ENCODE measurements at regions of chr6 and their contacts with region 1.

Region 1: DNA sequence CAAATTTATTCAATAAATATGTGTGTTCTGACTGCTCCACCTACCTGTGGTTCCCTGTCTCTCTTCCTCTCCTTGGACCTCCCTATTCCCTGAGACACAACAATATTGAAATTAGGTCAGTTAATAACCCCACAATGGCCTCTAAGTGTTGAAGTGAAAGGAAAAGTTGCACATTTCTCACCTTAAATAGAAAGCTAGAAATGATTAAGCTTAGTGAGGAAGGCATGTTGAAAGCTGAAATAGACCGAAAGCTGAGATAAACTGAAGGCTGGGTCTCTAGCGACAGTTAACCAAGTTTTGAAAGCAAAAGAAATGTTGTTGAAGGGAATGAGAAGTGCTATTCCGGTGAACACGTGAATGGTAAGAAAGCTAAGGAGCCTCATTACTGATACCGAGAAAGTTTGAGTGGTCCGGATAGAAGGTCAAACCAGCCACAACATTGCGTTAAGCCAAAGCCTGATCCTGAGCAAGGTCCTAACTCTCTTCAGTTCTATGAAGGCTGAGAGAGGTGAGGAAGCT is 34.1 kb downstream of the UST start:
- DNase-seq: peak; percentile 73
- ATAC-seq: peak; percentile 97
- H3K4me3 ChIP-seq: no peak overlapping the region
- H3K27ac ChIP-seq: no peak overlapping the region
- H3K4me1 ChIP-seq: peaks cover 8% of the 10 kb centered on the region
- H3K27me3 ChIP-seq: 0 out of 4 replicates have a peak, but pooled peaks cover 0 to 1% of the 10 kb centered on the region in 2 experiments
- CTCF ChIP-seq: peak in 1 of 3 experiments; percentile 19; a peak in 1 of 6 replicates
- EP300 ChIP-seq: 0 out of 4 replicates have a peak, but pooled peaks of 1 of the 2 experiments have one; percentile 9
- POLR2A ChIP-seq: no peak
- RAD21 ChIP-seq: no peak

Region 2: DNA sequence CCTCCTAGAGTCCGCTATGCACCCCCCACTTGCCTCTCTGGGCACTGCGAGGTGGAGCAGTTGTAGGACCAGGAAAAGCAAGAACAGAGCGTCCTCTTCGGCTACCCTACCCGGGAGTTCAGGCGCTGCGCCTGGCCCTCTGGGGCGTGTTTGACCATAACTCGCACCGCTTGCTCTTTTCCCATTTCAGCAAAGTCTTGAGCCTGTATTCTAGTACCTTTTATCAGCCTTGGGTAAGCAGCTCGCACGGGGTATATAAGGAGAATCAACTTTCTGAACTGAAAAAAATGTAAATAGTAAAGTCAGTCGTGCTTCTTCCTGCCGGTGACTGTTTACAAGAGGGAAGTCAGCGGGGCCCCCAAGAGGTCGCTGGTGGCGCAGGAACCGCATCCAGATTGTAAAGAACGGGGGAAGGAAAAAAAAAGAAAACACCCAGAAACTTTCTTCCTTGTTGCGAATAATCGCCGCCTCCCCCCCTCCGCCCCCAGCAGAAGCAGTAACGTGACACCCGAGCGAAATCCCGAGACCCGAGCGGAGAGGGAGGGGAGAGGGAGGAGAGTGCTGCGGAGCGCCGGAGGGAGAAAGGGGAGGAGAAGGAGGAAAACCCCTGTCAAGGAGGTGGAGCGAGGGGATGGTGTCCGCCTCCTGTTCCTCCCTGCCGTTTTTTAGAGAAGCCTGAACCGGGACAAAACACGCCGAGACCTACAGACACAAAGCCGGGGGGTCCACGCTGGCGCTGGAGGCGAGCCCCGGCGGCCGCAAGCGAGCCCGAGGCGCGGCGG is 34.4 kb before region 1 on chr6 and contains the start of gene UST:
- CTCF ChIA-PET with region 1: no interaction called
- POLR2A ChIA-PET with region 1: no interaction called
- RAD21 ChIA-PET with region 1: interaction called, 5 read pairs
- SMC1A ChIA-PET with region 1: interaction called, 6 read pairs
- in situ Hi-C with region 1: no loop called
- intact Hi-C with region 1: loop called (anchors 5 kb)
- DNase-seq: no peak
- ATAC-seq: peak; percentile 47
- H3K4me3 ChIP-seq: peak within 1 kb of the TSS; percentile 64
- H3K27ac ChIP-seq: no peak within 1 kb of the TSS
- H3K4me1 ChIP-seq: no peaks in the 10 kb centered on the region
- H3K27me3 ChIP-seq: peaks cover 1 to 17% of the 10 kb centered on the region in 2 experiments; a peak in 3 of 4 replicates
- CTCF ChIP-seq: peak; percentile 47 to 70 (median 57)
- EP300 ChIP-seq: no peak
- POLR2A ChIP-seq: no peak
- RAD21 ChIP-seq: peak; percentile 85
- polyA plus RNA-seq, gene UST: 3.6 to 3.7 TPM

Region 3: DNA sequence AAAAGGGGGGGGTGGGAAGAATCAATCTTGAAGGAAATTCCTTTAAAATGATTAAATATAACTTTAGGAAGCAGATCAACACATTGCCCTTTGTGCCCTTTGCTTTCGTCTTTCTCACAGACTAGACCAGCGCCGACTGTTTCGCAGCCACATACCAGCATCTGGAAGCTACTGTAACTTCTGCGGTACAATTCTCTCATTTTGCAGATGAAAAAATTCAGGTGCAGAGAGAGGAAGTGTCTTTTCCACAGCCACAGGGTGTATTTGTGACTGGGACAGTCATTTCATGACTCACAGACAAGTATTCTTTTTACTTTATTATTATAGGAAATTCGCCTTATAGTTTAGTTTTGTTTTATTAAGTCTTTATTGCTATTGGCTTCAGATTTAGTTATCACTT is 50.1 kb after region 1 on chr6:
- CTCF ChIA-PET with region 1: no interaction called
- POLR2A ChIA-PET with region 1: no interaction called
- RAD21 ChIA-PET with region 1: no interaction called
- SMC1A ChIA-PET with region 1: interaction called, 3 read pairs
- in situ Hi-C with region 1: no loop called
- intact Hi-C with region 1: loop called (anchors 2 kb)
- DNase-seq: no peak
- ATAC-seq: peak; percentile 73
- H3K4me3 ChIP-seq: no peak overlapping the region
- H3K27ac ChIP-seq: no peak overlapping the region
- H3K4me1 ChIP-seq: no peaks in the 10 kb centered on the region
- H3K27me3 ChIP-seq: no peaks in the 10 kb centered on the region
- CTCF ChIP-seq: no peak
- EP300 ChIP-seq: no peak
- POLR2A ChIP-seq: no peak
- RAD21 ChIP-seq: no peak

Region 4: DNA sequence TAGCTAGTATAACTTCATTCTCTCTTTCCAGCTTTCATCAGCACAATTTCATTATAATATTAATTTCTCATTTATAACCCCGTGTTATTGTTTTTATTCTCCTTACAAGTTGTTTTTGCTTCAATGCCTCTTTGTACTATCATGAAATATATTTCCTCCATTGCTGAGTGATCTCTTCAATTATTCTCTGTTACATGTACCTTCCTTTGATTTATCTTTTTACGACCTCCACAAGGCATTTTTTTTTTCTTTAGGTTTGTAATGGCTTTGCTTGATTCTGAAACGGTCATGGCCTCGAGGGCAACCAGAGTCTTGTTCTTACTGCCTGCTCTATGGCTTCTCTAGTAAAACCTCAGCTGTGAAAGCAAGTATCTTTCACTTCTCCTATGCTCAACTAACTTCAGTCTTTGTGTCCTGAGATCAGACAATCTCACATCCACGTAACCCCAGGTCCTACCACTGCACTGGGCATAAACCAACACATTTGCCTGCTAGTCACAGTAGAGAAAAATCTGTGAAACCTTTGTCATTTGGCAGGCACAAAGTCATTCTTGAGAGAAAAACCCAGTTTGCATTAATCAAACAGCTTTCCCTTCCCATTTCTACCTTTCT is 85.8 kb after region 1 on chr6:
- CTCF ChIA-PET with region 1: no interaction called
- POLR2A ChIA-PET with region 1: interaction called, 3 read pairs
- RAD21 ChIA-PET with region 1: no interaction called
- SMC1A ChIA-PET with region 1: interaction called, 3 read pairs
- in situ Hi-C with region 1: no loop called
- intact Hi-C with region 1: loop called (anchors 5 kb)
- DNase-seq: peak; percentile 68
- ATAC-seq: peak; percentile 98
- H3K4me3 ChIP-seq: no peak overlapping the region
- H3K27ac ChIP-seq: no peak overlapping the region
- H3K4me1 ChIP-seq: no peaks in the 10 kb centered on the region
- H3K27me3 ChIP-seq: no peaks in the 10 kb centered on the region
- CTCF ChIP-seq: no peak
- EP300 ChIP-seq: peak in 1 of 2 experiments; percentile 72; a peak in 1 of 4 replicates
- POLR2A ChIP-seq: no peak
- RAD21 ChIP-seq: 0 out of 2 replicates have a peak, but pooled peaks have one; percentile 10